B cell (primary cell): ENCODE measurements at regions of chr10 and their contacts with region 1.

Region 1: GRCh38 chr10:47047671-47048525 is 136.7 kb downstream of the PTPN20 start:
- DNase-seq: peak; percentile 69
- ATAC-seq: no peak
- H3K4me3 ChIP-seq: no peak overlapping the region
- H3K4me3 Mint-ChIP-seq: no peak overlapping the region
- H3K27ac ChIP-seq: no peak overlapping the region
- H3K27ac Mint-ChIP-seq: no peak overlapping the region
- H3K4me1 ChIP-seq: no peaks in the 10 kb centered on the region
- H3K4me1 Mint-ChIP-seq: no peaks in the 10 kb centered on the region
- H3K27me3 ChIP-seq: no peaks in the 10 kb centered on the region
- H3K27me3 Mint-ChIP-seq: peaks cover 3% of the 10 kb centered on the region
- CTCF ChIP-seq: peak; percentile 80

Region 2: GRCh38 chr10:47024399-47025252 is 23.3 kb before region 1 on chr10:
- CTCF ChIA-PET with region 1: interaction called, 21 read pairs
- POLR2A ChIA-PET with region 1: no interaction called
- intact Hi-C with region 1: no loop called
- DNase-seq: peak; percentile 72
- ATAC-seq: peak; percentile 58
- H3K4me3 ChIP-seq: no peak overlapping the region
- H3K4me3 Mint-ChIP-seq: no peak overlapping the region
- H3K27ac ChIP-seq: no peak overlapping the region
- H3K27ac Mint-ChIP-seq: no peak overlapping the region
- H3K4me1 ChIP-seq: no peaks in the 10 kb centered on the region
- H3K4me1 Mint-ChIP-seq: no peaks in the 10 kb centered on the region
- H3K27me3 ChIP-seq: no peaks in the 10 kb centered on the region
- H3K27me3 Mint-ChIP-seq: peaks cover 5% of the 10 kb centered on the region
- CTCF ChIP-seq: peak; percentile 83

Region 3: GRCh38 chr10:47269294-47269693 is 221.4 kb after region 1 on chr10:
- CTCF ChIA-PET with region 1: interaction called, 17 read pairs
- POLR2A ChIA-PET with region 1: no interaction called
- intact Hi-C with region 1: no loop called
- DNase-seq: peak; percentile 26
- ATAC-seq: no peak
- H3K4me3 ChIP-seq: no peak overlapping the region
- H3K4me3 Mint-ChIP-seq: no peak overlapping the region
- H3K27ac ChIP-seq: no peak overlapping the region
- H3K27ac Mint-ChIP-seq: no peak overlapping the region
- H3K4me1 ChIP-seq: no peaks in the 10 kb centered on the region
- H3K4me1 Mint-ChIP-seq: no peaks in the 10 kb centered on the region
- H3K27me3 ChIP-seq: no peaks in the 10 kb centered on the region
- H3K27me3 Mint-ChIP-seq: peaks cover 11% of the 10 kb centered on the region
- CTCF ChIP-seq: no peak

Region 4: GRCh38 chr10:47311932-47312662 is 264.2 kb after region 1 on chr10:
- CTCF ChIA-PET with region 1: interaction called, 201 read pairs
- POLR2A ChIA-PET with region 1: interaction called, 3 read pairs
- intact Hi-C with region 1: no loop called
- DNase-seq: peak; percentile 77
- ATAC-seq: peak; percentile 63
- H3K4me3 ChIP-seq: no peak overlapping the region
- H3K4me3 Mint-ChIP-seq: no peak overlapping the region
- H3K27ac ChIP-seq: no peak overlapping the region
- H3K27ac Mint-ChIP-seq: no peak overlapping the region
- H3K4me1 ChIP-seq: no peaks in the 10 kb centered on the region
- H3K4me1 Mint-ChIP-seq: no peaks in the 10 kb centered on the region
- H3K27me3 ChIP-seq: no peaks in the 10 kb centered on the region
- H3K27me3 Mint-ChIP-seq: no peaks in the 10 kb centered on the region
- CTCF ChIP-seq: peak; percentile 89

Region 5: GRCh38 chr10:47340608-47341170 is 292.8 kb after region 1 on chr10:
- CTCF ChIA-PET with region 1: interaction called, 16 read pairs
- POLR2A ChIA-PET with region 1: no interaction called
- intact Hi-C with region 1: no loop called
- DNase-seq: peak; percentile 61
- ATAC-seq: peak; percentile 45
- H3K4me3 ChIP-seq: no peak overlapping the region
- H3K4me3 Mint-ChIP-seq: no peak overlapping the region
- H3K27ac ChIP-seq: no peak overlapping the region
- H3K27ac Mint-ChIP-seq: no peak overlapping the region
- H3K4me1 ChIP-seq: peaks cover 5 to 6% of the 10 kb centered on the region in 2 donors
- H3K4me1 Mint-ChIP-seq: peaks cover 7% of the 10 kb centered on the region
- H3K27me3 ChIP-seq: peaks cover 0 to 3% (median 0%) of the 10 kb centered on the region in 4 experiments
- H3K27me3 Mint-ChIP-seq: peaks cover 41% of the 10 kb centered on the region
- CTCF ChIP-seq: peak; percentile 98